Activated T-helper 1 cell treated with anti-CD3 and anti-CD28 coated beads, Interleukin-12 subunit alpha, Interleukin-12 subunit beta, Interleukin-2, Interleukin-4 antibody, amounts not matched to agents 30 ng/mL and 10 ng/mL and 1 ng/mL, durations not matched to agents 14 hours and 24 hours and 36 hours (primary cell): ENCODE measurements at regions of chr16 and their contacts with region 1.

Region 1: GRCh38 chr16:31117391-31118197 is at the start of gene KAT8:
- DNase-seq: peak; percentile 95
- H3K4me3 Mint-ChIP-seq: peak within 1 kb of the TSS; percentile 88
- H3K27ac Mint-ChIP-seq: peak within 1 kb of the TSS; percentile 92
- H3K4me1 Mint-ChIP-seq: peaks cover 19% of the 10 kb centered on the region
- H3K27me3 Mint-ChIP-seq: no peaks in the 10 kb centered on the region
- total RNA-seq, gene KAT8: 55.4 and 58.2 TPM in 2 replicates

Region 2: GRCh38 chr16:31032736-31033708 is 84.6 kb before region 1 on chr16 and contains the start of gene STX4:
- intact Hi-C with region 1: loop called (anchors 1 kb)
- DNase-seq: peak; percentile 97
- H3K4me3 Mint-ChIP-seq: peak within 1 kb of the TSS; percentile 95
- H3K27ac Mint-ChIP-seq: peak within 1 kb of the TSS; percentile 92
- H3K4me1 Mint-ChIP-seq: peaks cover 24% of the 10 kb centered on the region
- H3K27me3 Mint-ChIP-seq: no peaks in the 10 kb centered on the region
- total RNA-seq, gene STX4: 56.4 and 58.7 TPM in 2 replicates

Region 3: GRCh38 chr16:31084616-31085260 is 32.9 kb before region 1 on chr16:
- intact Hi-C with region 1: no loop called
- DNase-seq: no peak
- H3K4me3 Mint-ChIP-seq: no peak overlapping the region
- H3K27ac Mint-ChIP-seq: no peak overlapping the region
- H3K4me1 Mint-ChIP-seq: no peaks in the 10 kb centered on the region
- H3K27me3 Mint-ChIP-seq: no peaks in the 10 kb centered on the region

Region 4: GRCh38 chr16:31273676-31274075 is 156.1 kb after region 1 on chr16:
- intact Hi-C with region 1: no loop called
- DNase-seq: no peak
- H3K4me3 Mint-ChIP-seq: no peak overlapping the region
- H3K27ac Mint-ChIP-seq: no peak overlapping the region
- H3K4me1 Mint-ChIP-seq: peaks cover 15% of the 10 kb centered on the region
- H3K27me3 Mint-ChIP-seq: peaks cover 2% of the 10 kb centered on the region

Region 5: DNA sequence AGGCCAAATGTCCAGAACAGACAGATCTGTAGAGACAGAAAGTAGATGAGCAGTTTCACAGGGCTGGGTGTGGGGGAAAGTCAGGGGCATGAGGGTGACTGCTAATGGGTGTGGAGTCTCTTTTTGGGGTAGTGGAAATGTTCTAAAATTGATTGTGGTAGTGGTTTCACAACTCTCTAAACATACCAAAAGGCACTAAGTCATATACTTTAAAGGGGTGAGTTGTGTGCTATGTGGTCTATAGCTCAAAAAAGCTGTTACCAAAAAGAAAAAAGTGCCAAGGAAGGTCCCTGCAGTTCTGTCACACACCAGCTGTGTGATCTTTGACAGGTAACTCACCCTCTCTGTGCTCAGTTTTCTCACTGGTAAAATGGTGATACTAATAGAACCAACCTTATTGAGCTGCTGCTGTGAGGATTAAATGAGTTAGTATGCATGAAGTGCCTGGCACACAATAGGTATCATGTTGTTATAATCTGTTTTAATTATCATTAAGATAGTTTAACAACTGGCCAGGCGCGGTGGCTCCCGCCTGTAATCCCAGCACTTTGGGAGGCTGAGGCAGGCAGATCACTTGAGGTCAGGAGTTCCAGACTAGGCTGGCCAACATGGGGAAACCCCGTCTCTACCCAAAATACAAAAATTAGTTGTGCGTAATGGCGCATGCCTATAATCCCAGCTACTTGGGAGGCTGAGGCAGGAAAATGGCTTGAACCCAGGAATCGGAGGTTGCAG is 247.7 kb after region 1 on chr16:
- intact Hi-C with region 1: no loop called
- DNase-seq: no peak
- H3K4me3 Mint-ChIP-seq: no peak overlapping the region
- H3K27ac Mint-ChIP-seq: peak overlapping the region; percentile 70
- H3K4me1 Mint-ChIP-seq: peaks cover 47% of the 10 kb centered on the region
- H3K27me3 Mint-ChIP-seq: no peaks in the 10 kb centered on the region